Right ventricle myocardium inferior (tissue), 1 donor: ENCODE measurements at regions of chr11 and their contacts with region 1.

Region 1: GRCh38 chr11:95067039-95067840 is 521 bp downstream of the SRSF8 start:
- DNase-seq: peak; percentile 91
- ATAC-seq: peak; percentile 88

Region 2: DNA sequence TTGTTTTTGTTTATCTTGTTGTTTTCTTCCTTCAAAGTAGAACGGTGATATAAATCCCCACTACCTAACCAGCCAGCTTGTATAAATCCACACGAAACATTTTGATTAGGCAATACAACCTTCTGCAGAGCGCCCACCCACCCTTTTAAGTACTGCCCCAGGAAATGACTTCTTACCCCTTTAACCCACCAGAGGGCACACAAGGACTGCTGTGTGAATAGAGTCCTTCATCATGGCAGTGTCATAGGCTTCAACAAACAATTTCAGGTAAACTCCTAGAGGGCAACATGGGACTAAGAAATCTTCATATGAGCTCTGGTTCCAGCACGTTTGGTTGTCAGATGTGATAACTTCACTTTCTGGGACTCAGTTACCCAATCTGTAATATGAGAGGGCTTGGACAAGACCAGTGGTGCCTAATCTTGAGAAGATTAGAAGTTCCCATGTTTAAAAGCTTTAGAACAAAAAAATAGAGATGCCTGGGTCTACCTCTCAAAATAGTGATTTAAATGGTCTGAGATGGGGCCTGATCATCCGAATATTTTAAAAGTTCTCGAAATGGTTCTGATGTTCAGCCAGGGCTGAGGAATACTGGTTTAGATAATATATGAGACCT is 444.0 kb before region 1 on chr11:
- intact Hi-C with region 1: loop called (anchors 10 kb)
- DNase-seq: no peak
- ATAC-seq: peak; percentile 93

Region 3: GRCh38 chr11:94973099-94973968 is 93.9 kb before region 1 on chr11 and contains the starts of genes CWC15 and KDM4D:
- intact Hi-C with region 1: loop called (anchors 10 kb)
- DNase-seq: peak; percentile 97
- ATAC-seq: peak; percentile 100
- total RNA-seq, gene CWC15: 79.1 TPM
- total RNA-seq, gene KDM4D: 0.54 TPM

Region 4: GRCh38 chr11:95089620-95090542 is 22.6 kb after region 1 on chr11 and contains the start of gene ENDOD1:
- intact Hi-C with region 1: loop called (anchors 2 kb)
- DNase-seq: peak; percentile 93
- ATAC-seq: peak; percentile 98
- total RNA-seq, gene ENDOD1: 11.2 TPM

Region 5: GRCh38 chr11:95231127-95231880 is 164.1 kb after region 1 on chr11 and contains the start of gene SESN3:
- intact Hi-C with region 1: loop called (anchors 5 kb)
- DNase-seq: peak; percentile 99
- ATAC-seq: peak; percentile 98
- total RNA-seq, gene SESN3: 6.0 TPM

Region 6: GRCh38 chr11:95705485-95706124 is 638.4 kb after region 1 on chr11:
- intact Hi-C with region 1: loop called (anchors 10 kb)
- DNase-seq: peak; percentile 88
- ATAC-seq: peak; percentile 97